ENCODE measurements at regions of chr13 and their contacts with region 1.

Region 1: GRCh38 chr13:21476893-21477472 is 17.9 kb upstream of the ZDHHC20 start:
- DNase-seq: peak; percentile 82
- ATAC-seq: peak; percentile 89
- H3K4me3 ChIP-seq: peak overlapping the region in 4 of 5 experiments; percentile 38 to 61 (median 49)
- H3K4me3 Mint-ChIP-seq: peak overlapping the region; percentile 92
- H3K27ac ChIP-seq: no peak overlapping the region
- H3K27ac Mint-ChIP-seq: peak overlapping the region; percentile 38
- H3K4me1 ChIP-seq: peaks cover 7 to 8% of the 10 kb centered on the region in 2 donors
- H3K4me1 Mint-ChIP-seq: peaks cover 16% of the 10 kb centered on the region
- H3K27me3 ChIP-seq: peaks cover 0 to 4% (median 2%) of the 10 kb centered on the region in 4 experiments
- H3K27me3 Mint-ChIP-seq: no peaks in the 10 kb centered on the region
- CTCF ChIP-seq: peak; percentile 92

Region 2: DNA sequence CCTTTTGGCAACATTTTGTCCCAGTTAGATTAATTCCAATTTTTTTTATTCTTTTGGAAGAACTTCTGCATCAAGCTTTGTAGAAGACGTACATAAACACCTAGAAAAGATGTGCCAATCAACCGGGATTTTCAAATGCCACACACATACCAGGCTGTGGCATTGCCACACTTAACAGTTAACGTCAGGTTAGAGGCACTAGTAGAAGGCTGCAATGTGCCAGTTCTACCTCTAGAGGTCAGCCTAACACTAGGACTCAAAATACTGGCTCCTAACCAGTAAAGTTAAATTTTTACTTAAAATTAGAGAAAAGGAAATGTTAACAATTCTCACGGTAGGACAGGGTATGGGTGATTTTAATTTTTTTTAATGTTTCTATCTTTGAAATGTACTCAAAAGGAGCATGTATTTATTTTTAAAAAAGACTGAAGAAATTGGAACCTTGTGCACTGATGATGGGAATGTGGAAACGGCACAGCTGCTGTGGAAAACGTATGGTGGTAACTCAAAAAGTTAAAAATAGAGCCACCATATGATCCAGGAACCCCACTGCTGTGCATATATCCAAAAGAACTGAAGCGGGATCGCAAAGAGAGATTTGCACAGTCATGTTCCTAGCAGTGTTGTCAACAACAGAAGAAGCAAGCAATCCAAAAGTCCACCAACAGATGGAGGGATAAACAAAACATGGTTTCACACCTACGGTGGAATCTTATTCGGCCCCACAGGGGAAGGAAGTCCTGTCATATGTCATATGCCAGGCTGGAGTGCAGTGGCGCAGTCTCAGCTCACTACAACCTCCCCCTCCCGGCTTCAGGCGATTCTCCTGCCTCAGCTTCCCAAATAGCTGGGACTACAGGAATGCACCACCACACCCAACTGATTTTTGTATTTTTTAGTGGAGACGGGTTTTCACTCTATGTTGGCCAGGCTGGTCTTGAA is 981.6 kb before region 1 on chr13:
- CTCF ChIA-PET with region 1: interaction called, 7 read pairs
- POLR2A ChIA-PET with region 1: no interaction called
- intact Hi-C with region 1: loop called (anchors 10 kb)
- DNase-seq: peak; percentile 76
- ATAC-seq: peak; percentile 88
- H3K4me3 ChIP-seq: no peak overlapping the region
- H3K4me3 Mint-ChIP-seq: no peak overlapping the region
- H3K27ac ChIP-seq: no peak overlapping the region
- H3K27ac Mint-ChIP-seq: no peak overlapping the region
- H3K4me1 ChIP-seq: peaks cover 4 to 5% of the 10 kb centered on the region in 2 donors
- H3K4me1 Mint-ChIP-seq: no peaks in the 10 kb centered on the region
- H3K27me3 ChIP-seq: no peaks in the 10 kb centered on the region
- H3K27me3 Mint-ChIP-seq: no peaks in the 10 kb centered on the region
- CTCF ChIP-seq: peak; percentile 98

Region 3: DNA sequence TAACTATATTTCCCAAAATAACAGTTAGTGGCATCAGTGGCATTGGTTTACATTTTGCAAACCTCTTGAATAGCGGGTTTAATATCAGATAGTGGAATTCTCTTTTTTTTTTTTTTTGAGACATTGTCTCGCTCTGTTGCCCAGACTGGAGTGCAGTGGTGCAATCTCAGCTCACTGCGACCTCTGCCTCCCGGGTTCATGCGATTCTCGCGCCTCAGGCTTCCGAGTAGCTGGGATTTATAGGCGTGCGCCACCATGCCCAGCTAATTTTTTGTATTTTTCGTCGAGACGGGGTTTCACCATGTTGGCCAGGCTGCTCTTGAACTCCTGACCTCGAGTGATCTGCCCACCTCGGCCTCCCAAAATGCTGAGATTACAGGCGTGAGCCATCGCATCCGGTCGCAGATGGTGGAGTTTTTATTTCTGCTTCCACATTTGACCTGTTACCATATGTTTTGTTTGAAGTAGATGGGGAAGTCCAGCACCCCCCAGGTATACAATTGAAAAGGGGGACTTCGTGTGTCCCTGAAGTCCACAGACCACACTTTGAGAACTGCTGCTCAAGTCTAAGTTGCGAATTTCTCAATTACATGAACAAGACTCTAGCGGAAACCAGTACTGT is 533.9 kb before region 1 on chr13:
- CTCF ChIA-PET with region 1: interaction called, 26 read pairs
- POLR2A ChIA-PET with region 1: no interaction called
- intact Hi-C with region 1: loop called (anchors 1 kb)
- DNase-seq: no peak
- ATAC-seq: no peak
- H3K4me3 ChIP-seq: no peak overlapping the region
- H3K4me3 Mint-ChIP-seq: no peak overlapping the region
- H3K27ac ChIP-seq: no peak overlapping the region
- H3K27ac Mint-ChIP-seq: no peak overlapping the region
- H3K4me1 ChIP-seq: peaks cover 6 to 10% of the 10 kb centered on the region in 2 donors
- H3K4me1 Mint-ChIP-seq: peaks cover 9% of the 10 kb centered on the region
- H3K27me3 ChIP-seq: peaks cover 0 to 13% (median 2%) of the 10 kb centered on the region in 4 experiments
- H3K27me3 Mint-ChIP-seq: peaks cover 45% of the 10 kb centered on the region
- CTCF ChIP-seq: no peak

Region 4: GRCh38 chr13:21176220-21176982 is 300.6 kb before region 1 on chr13 and contains the starts of genes MRPL57 and SKA3:
- CTCF ChIA-PET with region 1: interaction called, 15 read pairs
- POLR2A ChIA-PET with region 1: no interaction called
- intact Hi-C with region 1: no loop called
- DNase-seq: peak; percentile 95
- ATAC-seq: peak; percentile 93
- H3K4me3 ChIP-seq: peak within 1 kb of the TSS; percentile 67 to 97 (median 94)
- H3K4me3 Mint-ChIP-seq: peak within 1 kb of the TSS; percentile 98
- H3K27ac ChIP-seq: peak within 1 kb of the TSS; percentile 82 to 85
- H3K27ac Mint-ChIP-seq: peak within 1 kb of the TSS; percentile 97
- H3K4me1 ChIP-seq: peaks cover 11 to 15% of the 10 kb centered on the region in 2 donors
- H3K4me1 Mint-ChIP-seq: peaks cover 15% of the 10 kb centered on the region
- H3K27me3 ChIP-seq: no peaks in the 10 kb centered on the region
- H3K27me3 Mint-ChIP-seq: no peaks in the 10 kb centered on the region
- CTCF ChIP-seq: peak; percentile 22
- total RNA-seq, gene MRPL57: 9.7 and 12.1 TPM in 2 replicates
- total RNA-seq, gene SKA3: 0.20 and 0.53 TPM in 2 replicates

Region 5: GRCh38 chr13:21371011-21371410 is 106.0 kb before region 1 on chr13:
- CTCF ChIA-PET with region 1: interaction called, 3 read pairs
- POLR2A ChIA-PET with region 1: no interaction called
- intact Hi-C with region 1: loop called (anchors 5 kb)
- DNase-seq: no peak
- ATAC-seq: no peak
- H3K4me3 ChIP-seq: no peak overlapping the region
- H3K4me3 Mint-ChIP-seq: no peak overlapping the region
- H3K27ac ChIP-seq: no peak overlapping the region
- H3K27ac Mint-ChIP-seq: no peak overlapping the region
- H3K4me1 ChIP-seq: no peaks in the 10 kb centered on the region
- H3K4me1 Mint-ChIP-seq: peaks cover 1% of the 10 kb centered on the region
- H3K27me3 ChIP-seq: no peaks in the 10 kb centered on the region
- H3K27me3 Mint-ChIP-seq: no peaks in the 10 kb centered on the region
- CTCF ChIP-seq: no peak

Region 6: DNA sequence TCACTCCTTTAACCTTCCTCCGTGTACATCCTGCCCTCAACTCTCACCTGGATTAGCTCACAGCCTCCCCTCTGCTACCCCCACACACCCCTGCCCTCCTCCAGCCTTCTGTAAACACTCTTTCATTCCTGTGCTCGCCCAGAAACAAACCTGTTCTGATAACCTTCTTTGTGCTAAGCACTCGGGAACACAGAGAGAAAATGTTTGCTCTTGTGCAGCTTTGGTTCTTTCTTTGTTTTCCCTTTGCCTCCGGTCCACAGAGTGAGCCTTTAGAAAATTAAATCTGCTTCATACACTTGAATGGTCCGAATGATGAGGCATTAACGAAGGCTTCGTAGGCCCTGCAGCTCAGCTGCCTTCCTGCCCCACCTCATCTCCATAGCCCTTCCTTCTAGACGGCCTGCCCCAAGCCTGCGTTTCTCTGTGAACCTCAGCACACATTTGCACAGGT is 11.2 kb before region 1 on chr13:
- CTCF ChIA-PET with region 1: interaction called, 14 read pairs
- POLR2A ChIA-PET with region 1: no interaction called
- intact Hi-C with region 1: no loop called
- DNase-seq: no peak
- ATAC-seq: no peak
- H3K4me3 ChIP-seq: no peak overlapping the region
- H3K4me3 Mint-ChIP-seq: no peak overlapping the region
- H3K27ac ChIP-seq: no peak overlapping the region
- H3K27ac Mint-ChIP-seq: no peak overlapping the region
- H3K4me1 ChIP-seq: no peaks in the 10 kb centered on the region
- H3K4me1 Mint-ChIP-seq: no peaks in the 10 kb centered on the region
- H3K27me3 ChIP-seq: no peaks in the 10 kb centered on the region
- H3K27me3 Mint-ChIP-seq: peaks cover 6% of the 10 kb centered on the region
- CTCF ChIP-seq: no peak

Region 7: GRCh38 chr13:21541980-21542379 is 65.0 kb after region 1 on chr13:
- CTCF ChIA-PET with region 1: no interaction called
- POLR2A ChIA-PET with region 1: no interaction called
- intact Hi-C with region 1: no loop called
- DNase-seq: no peak
- ATAC-seq: no peak
- H3K4me3 ChIP-seq: no peak overlapping the region
- H3K4me3 Mint-ChIP-seq: no peak overlapping the region
- H3K27ac ChIP-seq: no peak overlapping the region
- H3K27ac Mint-ChIP-seq: no peak overlapping the region
- H3K4me1 ChIP-seq: no peaks in the 10 kb centered on the region
- H3K4me1 Mint-ChIP-seq: peaks cover 23% of the 10 kb centered on the region
- H3K27me3 ChIP-seq: no peaks in the 10 kb centered on the region
- H3K27me3 Mint-ChIP-seq: no peaks in the 10 kb centered on the region
- CTCF ChIP-seq: no peak

Measured in B cell (primary cell).